ENCODE measurements at regions of chr13 and their contacts with region 1.

Region 1: GRCh38 chr13:110644892-110645521 is 29.7 kb downstream of the NAXD start:
- DNase-seq: peak; percentile 74 to 88 (median 86)
- H3K4me3 ChIP-seq: peak overlapping the region in 2 of 7 experiments; percentile 36 to 44
- H3K27ac ChIP-seq: no peak overlapping the region
- H3K4me1 ChIP-seq: peaks cover 0 to 10% (median 9%) of the 10 kb centered on the region in 4 experiments
- H3K27me3 ChIP-seq: no peaks in the 10 kb centered on the region

Region 2: GRCh38 chr13:110680851-110681250 is 35.8 kb after region 1 on chr13:
- CTCF ChIA-PET with region 1: interaction called, 22 read pairs
- POLR2A ChIA-PET with region 1: no interaction called
- DNase-seq: peak in 2 of 3 donors; percentile 31 to 38
- H3K4me3 ChIP-seq: no peak overlapping the region
- H3K27ac ChIP-seq: no peak overlapping the region
- H3K4me1 ChIP-seq: no peaks in the 10 kb centered on the region
- H3K27me3 ChIP-seq: no peaks in the 10 kb centered on the region

Region 3: DNA sequence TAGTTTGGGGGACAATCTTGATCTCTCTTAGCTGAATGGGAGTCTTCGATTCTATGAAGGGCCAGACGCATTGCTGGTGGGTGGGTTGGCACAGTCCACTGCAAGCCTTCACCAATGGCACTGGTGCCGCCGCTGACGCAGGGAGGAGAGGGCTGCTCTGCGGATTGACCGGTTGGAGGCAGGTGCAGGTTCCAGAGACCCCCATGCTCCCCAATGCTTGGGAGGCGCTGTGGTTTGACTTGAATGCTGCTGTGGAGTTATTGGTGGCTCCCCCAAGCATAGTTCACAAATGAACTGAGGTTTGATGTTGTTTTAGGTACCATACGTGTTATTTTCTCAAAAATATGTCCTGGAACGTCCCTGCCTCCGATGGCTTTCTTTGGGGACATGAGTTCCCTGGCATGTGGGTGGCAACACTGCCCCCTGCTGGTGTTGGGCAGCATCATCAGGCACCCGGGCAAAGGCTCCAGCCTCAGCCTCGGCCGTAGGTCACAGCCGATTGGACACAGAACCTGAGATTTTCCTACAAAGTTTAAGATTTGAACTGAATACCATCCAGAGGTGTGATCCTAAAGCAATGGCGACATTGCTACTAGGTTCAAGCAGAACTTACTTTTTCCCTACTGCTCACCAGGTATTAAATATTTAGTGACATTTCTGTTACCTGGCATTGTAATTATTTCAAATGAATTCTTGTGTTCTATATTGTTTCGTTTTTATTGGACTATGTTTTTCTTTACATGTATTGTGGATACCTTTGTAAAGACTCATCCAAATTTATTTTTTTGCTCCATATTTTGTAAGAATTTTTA is 174.4 kb after region 1 on chr13:
- CTCF ChIA-PET with region 1: interaction called, 14 read pairs
- POLR2A ChIA-PET with region 1: no interaction called
- DNase-seq: peak; percentile 66 to 82 (median 72)
- H3K4me3 ChIP-seq: no peak overlapping the region
- H3K27ac ChIP-seq: no peak overlapping the region
- H3K4me1 ChIP-seq: peaks cover 0 to 4% (median 1%) of the 10 kb centered on the region in 4 experiments
- H3K27me3 ChIP-seq: peaks cover 0 to 8% (median 2%) of the 10 kb centered on the region in 5 experiments